Activated naive CD4-positive, alpha-beta T cell treated with anti-CD3 and anti-CD28 coated beads for 36 hours (primary cell): ENCODE measurements at regions of chr7 and their contacts with region 1.

Region 1: GRCh38 chr7:158976849-158977593 is 120.7 kb downstream of the DYNC2I1 start:
- DNase-seq: peak; percentile 95
- H3K4me3 Mint-ChIP-seq: peak overlapping the region; percentile 77
- H3K27ac Mint-ChIP-seq: peak overlapping the region; percentile 69
- H3K4me1 Mint-ChIP-seq: peaks cover 22% of the 10 kb centered on the region
- H3K27me3 Mint-ChIP-seq: no peaks in the 10 kb centered on the region

Region 2: DNA sequence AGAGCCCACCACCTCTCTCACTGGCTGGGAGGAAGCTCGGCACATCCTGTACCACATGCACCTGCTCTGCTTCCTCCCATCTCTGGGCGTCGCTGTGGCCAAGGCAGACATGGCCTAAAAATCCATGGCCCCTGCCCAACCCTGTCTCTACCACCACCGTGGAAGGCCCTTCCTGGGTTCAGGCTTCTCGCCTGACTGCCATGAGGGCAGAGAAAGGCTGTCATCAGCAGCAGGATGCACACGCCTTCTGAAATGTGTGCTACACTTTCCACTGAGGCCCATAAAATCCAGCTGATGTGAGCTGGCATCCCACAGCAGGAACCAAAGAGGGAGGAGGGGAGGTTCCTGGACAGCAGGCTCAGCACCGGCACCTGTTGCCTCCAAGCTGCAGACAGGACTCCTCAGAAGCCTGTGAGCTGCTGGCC is 482.8 kb before region 1 on chr7:
- CTCF ChIA-PET with region 1: no interaction called
- intact Hi-C with region 1: loop called (anchors 1 kb)
- DNase-seq: peak; percentile 48
- H3K4me3 Mint-ChIP-seq: no peak overlapping the region
- H3K27ac Mint-ChIP-seq: no peak overlapping the region
- H3K4me1 Mint-ChIP-seq: no peaks in the 10 kb centered on the region
- H3K27me3 Mint-ChIP-seq: peaks cover 21% of the 10 kb centered on the region

Region 3: DNA sequence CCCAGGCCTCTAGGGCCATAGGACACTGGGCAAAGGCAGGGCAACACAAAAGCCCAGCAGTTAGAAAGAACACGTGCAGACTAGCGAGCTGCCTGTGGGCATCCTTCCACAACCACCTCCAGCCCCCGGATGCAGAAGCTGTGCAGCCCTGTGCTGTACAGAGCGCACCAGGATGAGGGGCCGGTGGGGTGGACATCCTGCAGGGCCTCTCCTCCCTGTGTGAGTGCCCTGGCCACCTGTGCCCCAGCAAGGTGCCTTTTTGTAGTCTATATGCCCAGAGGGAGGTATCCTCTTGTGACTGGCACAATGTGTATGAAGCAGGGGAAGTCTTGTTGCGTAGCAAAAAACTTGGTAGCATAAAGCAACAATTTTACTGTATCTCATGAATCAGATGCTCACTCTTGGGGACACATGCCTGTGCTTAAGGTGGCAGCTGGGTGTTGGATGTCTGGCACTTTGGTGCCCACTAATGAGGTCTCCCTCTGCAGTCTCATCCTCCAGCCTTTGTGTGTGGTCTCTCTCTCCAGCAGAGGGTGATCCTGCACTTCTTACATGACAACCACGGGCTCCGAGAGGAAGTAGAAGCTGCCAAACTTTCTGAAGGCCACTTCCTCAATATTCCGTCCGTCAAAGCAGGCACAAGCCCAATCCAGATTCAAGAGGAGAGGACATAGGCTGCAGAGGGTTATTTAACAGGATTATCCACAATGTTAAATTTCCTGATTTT is 281.1 kb before region 1 on chr7:
- CTCF ChIA-PET with region 1: interaction called, 12 read pairs
- intact Hi-C with region 1: loop called (anchors 1 kb)
- DNase-seq: peak; percentile 33
- H3K4me3 Mint-ChIP-seq: no peak overlapping the region
- H3K27ac Mint-ChIP-seq: no peak overlapping the region
- H3K4me1 Mint-ChIP-seq: peaks cover 14% of the 10 kb centered on the region
- H3K27me3 Mint-ChIP-seq: no peaks in the 10 kb centered on the region

Region 4: DNA sequence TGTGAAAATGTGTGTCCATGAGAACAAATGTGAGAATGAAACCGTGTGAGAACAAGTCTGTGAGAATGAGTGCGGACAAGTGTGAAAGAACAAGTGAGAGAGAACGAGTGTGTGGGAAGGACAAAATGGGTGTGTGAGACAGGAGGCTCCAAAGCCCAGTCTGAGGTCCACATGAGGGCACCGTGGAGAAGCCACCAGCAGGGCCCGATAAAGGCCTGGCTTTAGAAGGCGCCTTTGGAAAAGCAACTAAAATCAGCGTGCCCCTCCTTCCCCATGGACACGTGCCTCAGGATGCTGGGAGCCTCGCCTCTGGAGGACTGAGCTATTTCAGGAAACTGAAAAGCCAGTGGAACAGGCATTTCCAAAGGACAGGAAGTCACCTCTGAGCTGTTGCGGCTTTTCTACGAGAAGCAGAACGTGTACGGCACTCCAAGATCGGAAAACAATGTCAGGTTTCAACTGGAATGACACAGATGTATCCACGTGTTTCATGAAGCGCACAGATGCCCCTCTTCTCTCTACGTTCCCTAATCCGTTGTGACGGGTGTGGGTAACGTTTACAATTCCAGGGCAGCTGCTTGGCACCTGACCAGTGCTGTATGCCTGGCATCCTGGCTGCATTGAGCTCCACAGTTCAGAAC is 194.1 kb before region 1 on chr7:
- CTCF ChIA-PET with region 1: interaction called, 5 read pairs
- intact Hi-C with region 1: loop called (anchors 5 kb)
- DNase-seq: peak; percentile 45
- H3K4me3 Mint-ChIP-seq: no peak overlapping the region
- H3K27ac Mint-ChIP-seq: no peak overlapping the region
- H3K4me1 Mint-ChIP-seq: peaks cover 14% of the 10 kb centered on the region
- H3K27me3 Mint-ChIP-seq: no peaks in the 10 kb centered on the region

Region 5: DNA sequence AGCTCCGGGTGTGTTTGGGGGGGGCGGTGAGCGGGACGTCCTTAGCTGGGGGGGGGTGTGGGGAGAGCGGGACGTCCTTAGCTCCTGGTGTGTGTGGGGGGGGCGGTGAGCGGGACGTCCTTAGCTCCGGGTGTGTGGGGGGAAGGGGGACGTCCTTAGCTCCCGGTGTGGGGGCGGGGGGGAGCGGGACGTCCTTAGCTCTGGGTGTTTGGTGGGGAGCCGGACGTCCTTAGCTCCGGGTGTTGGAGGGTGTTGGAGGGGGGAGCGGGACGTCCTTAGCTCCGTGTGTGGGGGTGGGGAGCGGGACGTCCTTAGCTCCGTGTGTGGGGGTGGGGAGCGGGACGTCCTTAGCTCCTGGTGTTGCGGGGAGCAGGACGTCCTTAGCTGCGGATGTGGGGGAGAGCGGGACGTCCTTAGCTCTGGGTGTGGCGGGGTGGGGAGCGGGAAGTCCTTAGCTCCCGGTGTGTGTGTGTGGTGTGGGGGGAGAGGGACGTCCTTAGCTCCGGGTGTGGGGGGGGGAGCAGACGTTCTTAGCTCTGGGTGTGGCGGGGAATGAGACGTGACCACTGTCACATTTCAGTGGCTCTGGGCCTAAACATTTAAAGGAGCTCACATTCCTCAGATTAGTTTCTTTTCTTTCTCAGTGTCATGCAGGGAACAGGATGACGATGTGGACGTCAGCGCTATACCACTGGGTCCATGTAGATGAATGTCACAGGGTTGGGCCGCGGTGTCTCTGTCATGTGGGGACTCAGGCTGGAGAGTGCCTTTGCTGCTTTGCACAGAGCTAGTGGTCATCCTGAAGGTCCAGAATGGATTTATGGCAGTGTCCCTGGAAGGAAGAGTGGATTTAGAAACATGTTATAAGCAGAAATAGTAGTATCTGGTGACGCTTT is 113.2 kb before region 1 on chr7:
- CTCF ChIA-PET with region 1: interaction called, 11 read pairs
- intact Hi-C with region 1: no loop called
- DNase-seq: peak; percentile 72
- H3K4me3 Mint-ChIP-seq: peak overlapping the region; percentile 78
- H3K27ac Mint-ChIP-seq: peak overlapping the region; percentile 91
- H3K4me1 Mint-ChIP-seq: peaks cover 40% of the 10 kb centered on the region
- H3K27me3 Mint-ChIP-seq: no peaks in the 10 kb centered on the region

Region 6: DNA sequence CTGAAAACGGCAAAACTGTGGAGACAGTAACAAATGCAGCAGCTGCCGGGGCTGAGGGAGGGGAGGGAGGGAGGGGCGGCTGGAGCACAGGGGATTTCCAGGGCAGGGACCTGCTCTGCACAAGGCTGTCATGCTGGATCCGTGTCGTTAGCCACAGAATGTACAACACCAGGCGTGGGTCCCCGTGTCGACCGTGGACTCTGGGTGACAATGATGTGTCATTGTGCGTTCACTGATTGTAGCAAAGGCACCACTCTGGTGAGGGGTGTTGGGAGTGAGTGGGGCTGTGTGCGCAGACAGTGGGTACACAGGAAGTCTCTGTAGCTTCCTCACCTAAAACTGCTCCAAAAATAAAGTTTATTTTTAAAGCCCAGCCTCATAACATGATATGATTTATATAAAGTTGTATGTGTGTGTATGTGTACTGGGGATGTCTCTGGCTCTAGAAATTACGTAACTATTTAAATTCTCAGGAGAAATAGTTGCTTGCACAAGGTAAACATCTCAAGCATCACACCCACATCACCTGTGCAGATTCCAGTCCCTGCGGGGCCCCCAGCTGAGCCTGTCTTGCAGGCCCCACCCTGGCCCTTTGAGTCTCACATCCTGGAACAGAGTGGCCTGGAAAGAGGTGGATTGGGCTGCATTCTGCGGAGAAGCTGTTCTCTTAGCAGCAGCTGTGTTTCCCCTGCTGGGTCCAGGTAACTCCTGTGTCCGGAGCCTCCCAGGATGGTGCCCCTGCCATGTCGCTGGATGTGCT is 15.0 kb after region 1 on chr7:
- CTCF ChIA-PET with region 1: interaction called, 10 read pairs
- intact Hi-C with region 1: no loop called
- DNase-seq: peak; percentile 25
- H3K4me3 Mint-ChIP-seq: no peak overlapping the region
- H3K27ac Mint-ChIP-seq: no peak overlapping the region
- H3K4me1 Mint-ChIP-seq: peaks cover 20% of the 10 kb centered on the region
- H3K27me3 Mint-ChIP-seq: peaks cover 43% of the 10 kb centered on the region

Region 7: DNA sequence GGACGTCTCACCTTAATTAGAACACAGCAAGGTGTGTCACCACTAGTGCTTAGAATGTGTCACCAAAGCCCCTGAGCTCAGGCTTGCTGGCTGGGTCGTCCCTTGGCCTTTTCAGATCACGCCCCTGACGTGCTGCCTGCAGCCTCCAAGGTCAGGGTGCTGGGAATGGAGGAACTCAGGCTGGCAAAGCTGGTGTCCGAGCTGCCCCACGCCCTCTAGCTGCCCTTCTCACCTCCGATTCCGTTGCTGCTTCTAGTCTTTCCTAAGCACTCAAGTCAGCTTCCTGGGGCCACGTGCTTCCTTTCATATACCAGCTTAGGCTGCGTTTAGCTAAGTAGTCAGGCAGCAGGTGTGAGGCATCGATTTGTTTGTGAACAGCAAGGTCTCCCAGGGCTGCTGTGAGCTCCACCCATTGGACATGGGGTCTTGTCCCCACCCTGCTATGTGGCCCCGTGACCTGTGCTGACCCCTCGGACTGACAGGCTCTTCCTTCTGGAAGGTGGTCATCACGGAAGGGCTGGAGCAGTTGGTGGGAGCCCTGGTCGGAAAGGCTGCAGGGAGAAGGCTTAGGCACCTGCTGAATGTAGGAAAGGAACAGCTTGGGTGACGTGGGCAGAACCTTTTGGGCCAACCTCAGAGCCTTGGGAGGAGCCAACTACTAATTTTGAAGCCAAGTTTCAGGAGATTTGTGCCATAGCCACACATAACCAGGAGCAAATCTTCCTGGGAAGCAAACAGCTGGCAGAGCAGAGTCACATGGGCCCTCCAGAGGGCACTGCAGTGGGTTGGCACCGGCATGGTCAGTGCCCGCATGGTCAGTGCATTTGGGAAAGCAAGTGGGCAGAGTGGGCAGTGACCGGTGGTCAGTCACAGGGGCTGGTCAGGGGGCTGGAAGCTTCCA is 138.8 kb after region 1 on chr7:
- CTCF ChIA-PET with region 1: no interaction called
- intact Hi-C with region 1: no loop called
- DNase-seq: no peak
- H3K4me3 Mint-ChIP-seq: no peak overlapping the region
- H3K27ac Mint-ChIP-seq: no peak overlapping the region
- H3K4me1 Mint-ChIP-seq: peaks cover 8% of the 10 kb centered on the region
- H3K27me3 Mint-ChIP-seq: peaks cover 13% of the 10 kb centered on the region